CD4-positive, alpha-beta T cell (primary cell): ENCODE measurements at regions of chr9 and their contacts with region 1.

Region 1: DNA sequence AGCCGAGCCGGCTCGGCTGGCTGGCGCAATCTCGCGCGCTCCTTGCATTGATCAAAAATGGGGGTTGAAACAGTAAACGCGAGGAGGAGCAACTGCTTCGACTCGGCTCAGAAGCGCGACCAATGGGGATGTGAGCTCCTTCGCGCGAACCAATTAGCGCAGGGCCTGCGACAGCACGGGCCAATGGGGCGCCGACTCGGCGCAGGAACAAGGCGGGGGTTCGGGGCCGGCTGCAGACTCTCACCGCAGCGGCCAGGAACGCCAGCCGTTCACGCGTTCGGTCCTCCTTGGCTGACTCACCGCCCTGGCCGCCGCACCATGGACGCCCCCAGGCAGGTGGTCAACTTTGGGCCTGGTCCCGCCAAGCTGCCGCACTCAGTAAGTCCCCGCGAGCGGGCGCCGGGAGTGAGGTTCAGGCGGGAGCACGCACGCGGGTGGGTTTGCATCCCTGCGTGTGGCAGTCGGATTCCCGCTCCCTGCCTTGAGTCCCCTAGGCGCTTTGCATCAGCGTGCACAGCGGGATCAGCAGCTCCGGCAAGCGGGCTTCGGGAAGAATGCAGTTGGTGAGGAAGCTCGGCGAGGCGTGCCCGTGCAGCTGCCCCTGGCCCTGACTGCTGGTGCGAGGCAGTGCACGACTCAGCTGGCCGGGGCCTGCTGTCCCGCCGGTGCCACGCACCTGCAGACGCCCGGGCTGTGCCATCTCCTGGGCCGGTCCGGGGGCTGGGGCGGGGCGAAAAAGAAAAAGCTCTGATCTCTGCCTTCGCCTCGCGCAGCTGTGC is at the start of gene PSAT1:
- DNase-seq: peak; percentile 74 to 94 (median 82)
- ATAC-seq: peak; percentile 99
- H3K4me3 ChIP-seq: peak within 1 kb of the TSS; percentile 95
- H3K4me3 Mint-ChIP-seq: peak within 1 kb of the TSS; percentile 95
- H3K27ac ChIP-seq: peak within 1 kb of the TSS in 1 of 2 donors; percentile 13
- H3K27ac Mint-ChIP-seq: peak within 1 kb of the TSS; percentile 57
- H3K4me1 ChIP-seq: peaks cover 28% of the 10 kb centered on the region
- H3K4me1 Mint-ChIP-seq: peaks cover 28% of the 10 kb centered on the region
- H3K27me3 ChIP-seq: no peaks in the 10 kb centered on the region
- H3K27me3 Mint-ChIP-seq: peaks cover 4% of the 10 kb centered on the region
- CTCF ChIP-seq: no peak
- total RNA-seq, gene PSAT1: 0.30 to 0.61 TPM

Region 2: GRCh38 chr9:77769246-77769645 is 527.8 kb before region 1 on chr9:
- CTCF ChIA-PET with region 1: no interaction called
- POLR2A ChIA-PET with region 1: no interaction called
- intact Hi-C with region 1: no loop called
- DNase-seq: no peak
- ATAC-seq: no peak
- H3K4me3 ChIP-seq: no peak overlapping the region
- H3K4me3 Mint-ChIP-seq: no peak overlapping the region
- H3K27ac ChIP-seq: no peak overlapping the region
- H3K27ac Mint-ChIP-seq: no peak overlapping the region
- H3K4me1 ChIP-seq: no peaks in the 10 kb centered on the region
- H3K4me1 Mint-ChIP-seq: no peaks in the 10 kb centered on the region
- H3K27me3 ChIP-seq: no peaks in the 10 kb centered on the region
- H3K27me3 Mint-ChIP-seq: no peaks in the 10 kb centered on the region
- CTCF ChIP-seq: no peak

Region 3: GRCh38 chr9:78235756-78236538 is 61.1 kb before region 1 on chr9 and contains the start of gene CEP78:
- CTCF ChIA-PET with region 1: no interaction called
- POLR2A ChIA-PET with region 1: interaction called, 7 read pairs
- intact Hi-C with region 1: loop called in 1 of 2 experiments (anchors 2 kb)
- DNase-seq: peak; percentile 73 to 94 (median 82)
- ATAC-seq: peak; percentile 99
- H3K4me3 ChIP-seq: peak within 1 kb of the TSS; percentile 75
- H3K4me3 Mint-ChIP-seq: no peak within 1 kb of the TSS
- H3K27ac ChIP-seq: peak within 1 kb of the TSS; percentile 18 to 72
- H3K27ac Mint-ChIP-seq: peak within 1 kb of the TSS; percentile 90
- H3K4me1 ChIP-seq: peaks cover 30% of the 10 kb centered on the region
- H3K4me1 Mint-ChIP-seq: peaks cover 39% of the 10 kb centered on the region
- H3K27me3 ChIP-seq: no peaks in the 10 kb centered on the region
- H3K27me3 Mint-ChIP-seq: no peaks in the 10 kb centered on the region
- CTCF ChIP-seq: no peak
- total RNA-seq, gene CEP78: 10.5 to 12.1 TPM

Region 4: DNA sequence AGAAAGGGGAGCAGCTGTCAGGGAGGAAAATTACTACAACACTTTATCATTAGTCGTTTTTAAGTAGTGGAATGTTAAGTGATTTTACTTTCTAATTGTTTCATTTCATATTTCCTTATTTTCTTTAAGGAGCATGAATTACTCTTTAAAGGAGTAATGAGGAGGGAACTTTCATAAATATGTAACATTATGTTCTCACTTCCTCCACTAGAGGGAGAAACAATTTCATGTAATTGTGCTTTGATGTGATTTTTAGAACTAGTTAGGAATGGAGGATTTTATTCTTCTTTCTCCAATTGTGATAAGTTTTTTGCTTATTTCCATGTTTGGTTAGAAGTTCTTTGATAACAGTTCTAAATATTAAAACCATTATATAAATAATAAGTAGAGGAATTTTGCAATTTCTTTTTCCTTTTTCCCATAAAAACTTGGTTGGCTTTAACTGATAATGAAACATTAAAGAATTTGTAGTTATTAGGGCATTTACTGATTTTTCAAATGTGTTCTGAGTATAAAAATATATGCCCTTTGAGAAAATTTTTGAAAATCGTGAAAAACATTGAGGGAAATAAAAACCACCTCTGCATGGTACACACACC is 35.6 kb before region 1 on chr9:
- CTCF ChIA-PET with region 1: interaction called, 3 read pairs
- POLR2A ChIA-PET with region 1: interaction called, 3 read pairs
- intact Hi-C with region 1: loop called in 1 of 2 experiments (anchors 5 kb)
- DNase-seq: peak in 3 of 14 experiments; percentile 38 to 44 (median 42)
- ATAC-seq: peak; percentile 48
- H3K4me3 ChIP-seq: no peak overlapping the region
- H3K4me3 Mint-ChIP-seq: no peak overlapping the region
- H3K27ac ChIP-seq: no peak overlapping the region
- H3K27ac Mint-ChIP-seq: no peak overlapping the region
- H3K4me1 ChIP-seq: no peaks in the 10 kb centered on the region
- H3K4me1 Mint-ChIP-seq: no peaks in the 10 kb centered on the region
- H3K27me3 ChIP-seq: no peaks in the 10 kb centered on the region
- H3K27me3 Mint-ChIP-seq: no peaks in the 10 kb centered on the region
- CTCF ChIP-seq: peak; percentile 87